ENCODE measurements at regions of chr6 and their contacts with region 1.

Region 1: DNA sequence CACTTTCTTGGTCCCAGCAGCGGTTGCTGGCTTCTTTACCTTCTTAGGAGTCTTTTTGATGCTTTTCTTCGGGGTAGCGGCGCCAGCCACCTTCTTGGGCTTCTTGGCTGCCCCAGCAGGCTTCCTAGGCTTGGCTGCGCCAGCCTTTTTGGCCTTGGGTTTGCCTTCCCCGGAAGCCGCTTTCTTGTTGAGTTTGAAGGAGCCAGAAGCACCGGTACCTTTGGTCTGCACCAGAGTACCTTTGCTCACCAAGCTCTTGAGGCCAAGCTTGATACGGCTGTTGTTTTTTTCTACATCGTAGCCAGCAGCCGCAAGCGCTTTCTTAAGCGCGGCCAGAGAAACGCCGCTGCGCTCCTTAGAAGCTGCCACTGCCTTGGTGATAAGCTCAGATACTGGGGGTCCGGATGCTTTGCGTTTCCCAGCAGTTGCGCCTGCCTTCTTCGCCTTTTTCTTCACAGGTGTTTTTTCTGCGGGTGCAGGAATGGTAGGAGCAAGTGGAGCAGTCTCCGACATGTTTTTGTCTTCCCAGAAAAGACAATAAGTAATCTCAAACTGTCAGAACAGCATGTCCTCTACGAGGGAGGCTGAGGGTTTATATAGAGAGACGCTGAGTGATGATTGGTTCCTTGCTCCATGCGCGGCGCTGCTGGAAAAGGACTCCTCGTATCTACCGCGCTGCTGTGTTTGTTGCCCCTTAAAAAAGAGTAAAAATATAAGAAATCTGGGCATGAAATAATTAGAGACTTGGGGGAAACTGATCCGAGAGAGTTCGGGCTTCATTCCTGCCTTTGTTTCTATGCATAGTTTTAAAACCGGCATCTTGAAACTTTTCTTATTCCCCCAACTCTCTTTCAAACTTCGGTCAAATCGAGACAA is 130.3 kb upstream of the BTN3A2 start:
- DNase-seq: peak; percentile 81
- ATAC-seq: peak; percentile 73
- H3K4me3 Mint-ChIP-seq: peak overlapping the region; percentile 77
- H3K27ac Mint-ChIP-seq: peak overlapping the region; percentile 100
- H3K4me1 Mint-ChIP-seq: peaks cover 31% of the 10 kb centered on the region
- H3K27me3 Mint-ChIP-seq: peaks cover 2% of the 10 kb centered on the region

Region 2: DNA sequence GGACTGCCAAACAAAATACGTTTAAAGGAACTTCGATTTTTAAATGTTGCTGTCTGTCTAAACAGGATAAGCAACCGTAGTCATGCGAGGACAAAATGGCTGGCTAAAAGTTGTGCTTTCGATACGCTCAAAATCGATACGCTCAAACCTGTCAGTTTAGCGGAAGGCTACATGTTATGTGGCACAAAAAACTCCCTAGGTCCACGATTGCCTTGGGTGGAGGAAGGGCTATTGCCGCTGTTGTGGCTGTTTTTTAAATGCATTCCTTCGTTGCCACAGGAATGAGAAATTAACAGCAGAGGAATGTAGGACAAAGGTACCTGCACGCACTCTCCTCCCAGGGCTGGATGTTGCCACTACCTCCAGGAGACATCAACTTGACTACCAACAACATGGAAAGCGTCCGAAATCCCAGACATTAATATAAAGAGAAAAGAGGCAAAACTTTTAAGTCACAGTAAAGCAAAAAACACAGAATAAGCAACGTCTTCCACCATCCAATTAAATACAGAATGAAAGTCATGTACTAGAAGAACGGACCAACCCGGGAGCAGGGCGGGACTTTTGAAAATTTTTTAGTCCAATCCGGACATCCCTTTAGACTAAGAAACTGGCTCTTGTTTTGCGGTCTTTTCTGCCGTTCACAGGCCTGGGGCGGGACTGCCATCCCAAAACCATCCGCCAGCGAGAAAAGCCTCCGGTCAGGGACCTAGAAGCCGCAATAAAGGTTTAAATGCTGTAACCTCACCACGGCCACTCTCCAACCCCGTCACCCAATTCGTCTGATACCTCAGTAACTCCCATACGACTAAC is 179.6 kb before region 1 on chr6:
- CTCF ChIA-PET with region 1: no interaction called
- POLR2A ChIA-PET with region 1: interaction called, 10 read pairs
- intact Hi-C with region 1: no loop called
- DNase-seq: peak; percentile 91
- ATAC-seq: peak; percentile 70
- H3K4me3 Mint-ChIP-seq: peak overlapping the region; percentile 96
- H3K27ac Mint-ChIP-seq: peak overlapping the region; percentile 99
- H3K4me1 Mint-ChIP-seq: peaks cover 13% of the 10 kb centered on the region
- H3K27me3 Mint-ChIP-seq: no peaks in the 10 kb centered on the region

Region 3: DNA sequence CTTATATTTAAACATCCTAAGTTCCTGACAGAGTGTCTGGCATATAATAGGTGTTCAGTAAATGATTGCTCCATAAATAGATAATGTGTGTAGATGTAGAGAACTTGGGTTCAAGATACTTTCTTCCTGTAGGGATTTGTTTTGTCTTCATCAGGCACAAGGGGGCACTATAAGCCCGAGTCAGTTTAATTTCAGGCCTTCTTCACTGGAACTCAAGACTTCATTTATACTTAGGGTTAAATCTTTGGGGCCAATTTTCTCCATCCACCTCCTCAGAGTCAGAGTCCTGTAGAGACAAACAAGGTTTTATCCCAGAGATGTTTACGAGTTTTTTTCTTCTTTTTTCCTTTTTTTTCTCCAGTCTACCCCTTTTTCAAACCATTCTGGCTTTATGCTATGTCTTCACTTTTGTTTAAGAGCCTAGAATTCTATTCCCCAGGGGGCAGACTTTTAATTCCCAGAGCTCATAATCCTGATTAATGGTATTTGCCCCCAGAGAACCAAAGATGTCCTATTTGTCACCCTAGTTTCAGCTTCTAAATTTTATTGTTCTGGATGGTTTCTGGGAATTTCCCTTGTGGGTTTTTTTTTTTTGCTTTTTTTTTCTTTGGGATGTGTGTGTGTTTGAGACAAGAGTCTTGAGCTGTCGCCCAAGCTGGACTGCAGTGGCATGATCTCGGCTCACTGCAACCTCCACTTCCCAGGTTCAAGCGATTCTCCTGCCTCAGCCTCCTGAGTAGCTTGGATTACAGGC is 59.1 kb before region 1 on chr6:
- CTCF ChIA-PET with region 1: interaction called, 5 read pairs
- POLR2A ChIA-PET with region 1: interaction called, 9 read pairs
- intact Hi-C with region 1: loop called in 1 of 2 experiments (anchors 1 kb)
- DNase-seq: peak; percentile 69
- ATAC-seq: peak; percentile 14
- H3K4me3 Mint-ChIP-seq: peak overlapping the region; percentile 30
- H3K27ac Mint-ChIP-seq: peak overlapping the region; percentile 80
- H3K4me1 Mint-ChIP-seq: peaks cover 33% of the 10 kb centered on the region
- H3K27me3 Mint-ChIP-seq: no peaks in the 10 kb centered on the region

Region 4: DNA sequence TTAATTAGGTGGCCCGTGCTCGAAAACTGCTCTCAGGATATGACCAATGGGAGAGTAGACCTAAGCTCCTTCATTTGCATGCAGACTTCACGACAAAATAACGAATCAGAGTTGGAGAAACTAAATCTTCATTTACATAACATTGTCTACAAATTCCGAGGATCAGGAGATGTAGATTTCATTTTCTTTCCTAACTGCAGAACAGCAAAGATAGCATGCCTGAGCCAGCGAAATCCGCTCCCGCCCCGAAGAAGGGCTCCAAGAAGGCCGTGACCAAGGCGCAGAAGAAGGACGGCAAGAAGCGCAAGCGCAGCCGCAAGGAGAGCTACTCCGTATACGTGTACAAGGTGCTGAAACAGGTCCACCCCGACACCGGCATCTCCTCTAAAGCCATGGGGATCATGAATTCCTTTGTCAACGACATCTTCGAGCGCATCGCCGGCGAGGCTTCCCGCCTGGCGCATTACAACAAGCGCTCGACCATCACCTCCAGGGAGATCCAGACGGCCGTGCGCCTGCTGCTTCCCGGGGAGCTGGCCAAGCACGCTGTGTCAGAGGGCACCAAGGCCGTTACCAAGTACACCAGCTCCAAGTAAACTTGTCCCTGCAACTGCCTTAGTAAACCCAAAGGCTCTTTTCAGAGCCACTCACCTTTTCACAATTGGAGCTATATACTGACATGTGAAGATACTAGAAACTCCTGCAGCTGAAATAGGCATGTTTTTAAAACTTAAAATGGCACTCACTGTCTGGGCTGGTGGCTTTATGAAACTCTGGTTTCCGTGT is 50.9 kb before region 1 on chr6:
- CTCF ChIA-PET with region 1: no interaction called
- POLR2A ChIA-PET with region 1: interaction called, 32 read pairs
- intact Hi-C with region 1: no loop called
- DNase-seq: peak; percentile 82
- ATAC-seq: peak; percentile 80
- H3K4me3 Mint-ChIP-seq: peak overlapping the region; percentile 89
- H3K27ac Mint-ChIP-seq: peak overlapping the region; percentile 92
- H3K4me1 Mint-ChIP-seq: peaks cover 45% of the 10 kb centered on the region
- H3K27me3 Mint-ChIP-seq: no peaks in the 10 kb centered on the region

Region 5: GRCh38 chr6:26204332-26205165 is 30.1 kb before region 1 on chr6:
- CTCF ChIA-PET with region 1: interaction called, 3 read pairs
- POLR2A ChIA-PET with region 1: interaction called, 131 read pairs
- intact Hi-C with region 1: loop called (anchors 1 kb)
- DNase-seq: peak; percentile 92
- ATAC-seq: peak; percentile 69
- H3K4me3 Mint-ChIP-seq: no peak overlapping the region
- H3K27ac Mint-ChIP-seq: no peak overlapping the region
- H3K4me1 Mint-ChIP-seq: peaks cover 20% of the 10 kb centered on the region
- H3K27me3 Mint-ChIP-seq: no peaks in the 10 kb centered on the region

Region 6: DNA sequence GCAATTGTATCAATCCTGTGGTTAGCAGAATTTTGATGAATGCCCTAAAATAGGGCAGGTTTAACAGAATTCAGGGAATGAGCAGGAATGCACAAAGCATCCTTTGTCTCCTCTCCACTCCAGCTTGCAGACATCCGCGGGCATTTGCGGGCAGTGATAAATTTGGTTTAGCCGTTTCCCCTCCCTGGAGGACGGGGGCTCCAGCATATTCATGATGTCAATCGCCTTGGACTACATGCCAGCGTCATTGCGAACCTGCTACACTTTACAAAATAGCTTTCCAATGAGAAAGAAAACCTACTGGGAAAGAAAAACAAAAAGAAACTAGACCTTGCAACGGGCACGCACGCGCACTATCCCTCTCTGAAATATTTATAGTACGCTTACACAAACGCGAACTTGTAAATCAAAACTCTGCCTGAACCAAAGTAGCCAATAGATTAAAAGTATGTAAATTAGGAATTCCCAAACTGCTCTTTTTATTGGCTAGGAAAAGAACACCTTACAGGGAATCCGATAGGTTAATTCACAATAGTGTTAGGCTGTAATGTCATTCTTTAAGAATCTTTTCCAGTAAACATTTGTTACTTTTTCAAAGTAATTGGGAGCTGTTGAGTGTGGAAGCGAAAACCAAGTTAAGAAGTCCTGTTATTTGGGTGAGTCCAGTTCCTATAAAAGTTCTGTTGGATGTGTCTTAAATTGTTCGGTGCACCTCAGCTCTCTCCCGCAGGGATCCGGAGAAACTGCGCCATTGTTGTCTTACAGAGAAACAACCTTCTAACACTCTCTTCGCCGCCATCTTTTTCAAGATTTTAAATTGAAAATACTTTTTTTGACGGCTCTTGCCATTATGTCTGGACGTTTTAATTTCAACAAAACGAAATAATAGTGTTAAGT is 10.8 kb before region 1 on chr6:
- CTCF ChIA-PET with region 1: interaction called, 4 read pairs
- POLR2A ChIA-PET with region 1: interaction called, 41 read pairs
- intact Hi-C with region 1: loop called (anchors 1 kb)
- DNase-seq: peak; percentile 79
- ATAC-seq: peak; percentile 86
- H3K4me3 Mint-ChIP-seq: no peak overlapping the region
- H3K27ac Mint-ChIP-seq: no peak overlapping the region
- H3K4me1 Mint-ChIP-seq: peaks cover 8% of the 10 kb centered on the region
- H3K27me3 Mint-ChIP-seq: no peaks in the 10 kb centered on the region

Region 7: GRCh38 chr6:26249957-26250697 is 15.5 kb after region 1 on chr6:
- CTCF ChIA-PET with region 1: interaction called, 34 read pairs
- POLR2A ChIA-PET with region 1: interaction called, 9 read pairs
- intact Hi-C with region 1: loop called (anchors 2 kb)
- DNase-seq: peak; percentile 85
- ATAC-seq: peak; percentile 63
- H3K4me3 Mint-ChIP-seq: peak overlapping the region; percentile 86
- H3K27ac Mint-ChIP-seq: peak overlapping the region; percentile 97
- H3K4me1 Mint-ChIP-seq: peaks cover 14% of the 10 kb centered on the region
- H3K27me3 Mint-ChIP-seq: no peaks in the 10 kb centered on the region

Measured in activated CD4-positive, alpha-beta T cell treated with anti-CD3 and anti-CD28 coated beads for 36 hours (primary cell).